ENCODE measurements at regions of chr11 and their contacts with region 1.

Region 1: GRCh38 chr11:126318574-126319373 is 14.9 kb downstream of the DCPS start:
- DNase-seq: no peak
- ATAC-seq: 0 out of 2 replicates have a peak, but pooled peaks have one; percentile 38
- H3K4me3 ChIP-seq: no peak overlapping the region
- H3K27ac ChIP-seq: no peak overlapping the region
- H3K4me1 ChIP-seq: no peaks in the 10 kb centered on the region
- H3K27me3 ChIP-seq: no peaks in the 10 kb centered on the region
- CTCF ChIP-seq: no peak

Region 2: GRCh38 chr11:126293726-126294125 is 25.0 kb before region 1 on chr11:
- CTCF ChIA-PET with region 1: interaction called, 11 read pairs
- POLR2A ChIA-PET with region 1: no interaction called
- in situ Hi-C with region 1: no loop called
- intact Hi-C with region 1: no loop called
- DNase-seq: no peak
- ATAC-seq: 0 out of 2 replicates have a peak, but pooled peaks have one; percentile 10
- H3K4me3 ChIP-seq: no peak overlapping the region
- H3K27ac ChIP-seq: no peak overlapping the region
- H3K4me1 ChIP-seq: no peaks in the 10 kb centered on the region
- H3K27me3 ChIP-seq: no peaks in the 10 kb centered on the region
- CTCF ChIP-seq: no peak

Region 3: DNA sequence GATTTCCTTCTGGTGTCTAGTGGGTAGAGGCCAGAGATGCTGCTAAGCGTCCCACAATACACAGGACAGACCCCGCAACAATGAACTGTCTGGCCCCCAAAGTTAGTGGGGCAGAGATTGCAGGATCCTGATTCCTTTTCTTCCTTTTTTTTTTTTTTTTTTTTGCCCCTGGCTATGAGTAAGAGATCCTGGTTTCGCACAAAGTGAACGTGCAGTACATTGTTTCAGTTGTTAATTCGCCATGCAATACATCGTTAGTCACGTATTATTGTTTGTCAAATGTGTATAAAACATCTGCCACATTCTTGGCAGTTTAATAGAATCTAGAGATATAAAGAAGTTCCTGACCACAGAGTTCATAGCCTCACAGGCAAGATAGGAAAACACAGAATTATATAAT is 57.0 kb after region 1 on chr11:
- CTCF ChIA-PET with region 1: no interaction called
- POLR2A ChIA-PET with region 1: interaction called, 11 read pairs
- in situ Hi-C with region 1: no loop called
- intact Hi-C with region 1: no loop called
- DNase-seq: no peak
- ATAC-seq: no peak
- H3K4me3 ChIP-seq: no peak overlapping the region
- H3K27ac ChIP-seq: no peak overlapping the region
- H3K4me1 ChIP-seq: peaks cover 13% of the 10 kb centered on the region
- H3K27me3 ChIP-seq: no peaks in the 10 kb centered on the region
- CTCF ChIP-seq: no peak

Measured in Panc1 (cell line).